Endothelial cell of umbilical vein (primary cell): ENCODE measurements at regions of chr3 and their contacts with region 1.

Region 1: DNA sequence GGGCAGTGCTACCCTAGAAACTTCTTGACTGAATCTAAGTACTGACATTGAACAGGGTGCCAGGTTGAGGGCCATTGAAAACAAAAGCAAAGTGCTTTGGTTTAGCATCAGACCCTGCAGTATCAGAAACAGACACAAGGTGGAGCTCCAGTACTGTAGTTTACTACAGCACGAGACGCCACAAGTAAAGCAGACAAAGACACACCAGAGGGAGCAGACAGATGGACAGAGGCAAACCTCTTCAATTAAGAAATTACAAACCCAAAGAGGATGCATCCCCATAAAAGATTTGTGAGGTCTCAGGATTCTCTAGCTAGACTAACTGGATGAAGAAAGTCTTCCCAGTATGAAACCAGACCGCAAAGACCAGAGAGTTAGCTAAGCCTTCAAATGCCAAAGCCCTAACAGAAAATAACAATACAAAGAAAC is 16.6 kb downstream of the TOP2B start:
- DNase-seq: peak; percentile 86
- H3K4me3 ChIP-seq: no peak overlapping the region
- H3K27ac ChIP-seq: no peak overlapping the region
- H3K4me1 ChIP-seq: no peaks in the 10 kb centered on the region
- H3K27me3 ChIP-seq: no peaks in the 10 kb centered on the region
- CTCF ChIP-seq: peak; percentile 83 to 89
- POLR2A ChIP-seq: no peak

Region 2: GRCh38 chr3:25633919-25634318 is 14.2 kb before region 1 on chr3:
- CTCF ChIA-PET with region 1: interaction called, 12 read pairs
- POLR2A ChIA-PET with region 1: no interaction called
- dilution Hi-C with region 1: no loop called
- intact Hi-C with region 1: no loop called
- DNase-seq: no peak
- H3K4me3 ChIP-seq: no peak overlapping the region
- H3K27ac ChIP-seq: no peak overlapping the region
- H3K4me1 ChIP-seq: no peaks in the 10 kb centered on the region
- H3K27me3 ChIP-seq: no peaks in the 10 kb centered on the region
- CTCF ChIP-seq: no peak
- POLR2A ChIP-seq: no peak

Region 3: DNA sequence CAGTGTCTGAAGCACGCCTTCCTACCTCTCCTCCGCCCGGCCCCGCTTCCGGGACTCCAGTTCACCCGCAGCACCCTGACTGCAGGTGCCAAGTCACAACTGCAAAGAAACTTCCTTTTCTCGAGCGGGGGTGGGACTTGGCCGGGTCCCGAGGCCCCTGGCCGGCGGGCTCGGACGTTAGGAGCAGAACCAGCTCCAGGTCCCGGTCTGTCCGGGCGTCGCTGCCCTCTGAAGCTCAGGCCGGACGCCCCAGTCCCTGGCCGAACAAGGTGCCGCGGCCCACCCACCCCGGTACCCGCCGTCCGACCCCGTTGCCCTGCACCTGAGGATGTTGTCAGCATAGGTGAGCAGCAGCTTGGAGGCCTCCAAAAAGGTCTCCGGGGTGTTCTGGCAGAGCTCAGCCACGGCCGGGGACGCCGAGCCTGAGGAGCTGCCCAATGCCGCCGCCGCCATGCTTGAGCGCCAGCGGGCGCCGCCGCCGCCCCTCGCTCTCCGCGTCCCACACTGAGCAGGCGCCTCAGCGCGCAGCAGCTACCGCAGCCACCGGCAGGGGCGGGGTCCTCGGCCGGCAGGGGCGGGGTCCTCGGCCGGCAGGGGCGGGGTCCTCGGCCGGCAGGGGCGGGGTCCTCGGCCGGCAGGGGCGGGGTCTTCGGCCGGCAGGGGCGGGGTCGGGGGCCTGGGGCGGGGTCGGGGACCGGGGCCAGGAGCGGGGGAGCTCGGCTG is 135.0 kb after region 1 on chr3 and contains the start of gene NGLY1:
- CTCF ChIA-PET with region 1: interaction called, 20 read pairs
- POLR2A ChIA-PET with region 1: no interaction called
- dilution Hi-C with region 1: no loop called
- intact Hi-C with region 1: loop called (anchors 1 kb)
- DNase-seq: peak; percentile 81
- H3K4me3 ChIP-seq: peak within 1 kb of the TSS; percentile 57 to 98 (median 81)
- H3K27ac ChIP-seq: peak within 1 kb of the TSS; percentile 47
- H3K4me1 ChIP-seq: peaks cover 13% of the 10 kb centered on the region
- H3K27me3 ChIP-seq: no peaks in the 10 kb centered on the region
- CTCF ChIP-seq: peak in 1 of 2 donors; percentile 5
- POLR2A ChIP-seq: peak; percentile 89
- total RNA-seq, gene NGLY1: 29.6 and 31.5 TPM in 2 replicates

Region 4: DNA sequence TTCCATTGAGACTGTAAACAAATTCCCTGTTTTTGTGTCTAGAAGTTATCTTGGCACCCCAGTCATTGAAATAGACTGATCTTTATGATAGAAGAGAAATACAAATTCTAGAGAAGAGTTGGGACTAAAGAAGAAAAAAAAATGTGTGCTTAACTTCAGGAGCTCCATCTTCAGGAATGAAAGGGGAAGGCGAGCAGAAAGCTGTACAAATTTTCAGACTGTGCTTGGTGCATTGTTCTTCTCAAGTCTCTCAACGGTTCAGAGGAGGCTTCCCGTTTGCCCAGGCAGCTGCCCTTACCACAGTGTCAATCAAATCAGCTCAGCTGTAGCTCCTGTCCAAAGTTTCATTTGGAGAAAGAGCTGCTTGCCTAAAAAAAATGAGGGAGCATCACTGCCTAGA is 183.5 kb after region 1 on chr3:
- CTCF ChIA-PET with region 1: interaction called, 50 read pairs
- POLR2A ChIA-PET with region 1: no interaction called
- dilution Hi-C with region 1: no loop called
- intact Hi-C with region 1: loop called (anchors 1 kb)
- DNase-seq: peak; percentile 34
- H3K4me3 ChIP-seq: no peak overlapping the region
- H3K27ac ChIP-seq: no peak overlapping the region
- H3K4me1 ChIP-seq: no peaks in the 10 kb centered on the region
- H3K27me3 ChIP-seq: peaks cover 0 to 5% of the 10 kb centered on the region in 2 experiments
- CTCF ChIP-seq: peak in 1 of 2 donors; percentile 28
- POLR2A ChIP-seq: no peak

Region 5: DNA sequence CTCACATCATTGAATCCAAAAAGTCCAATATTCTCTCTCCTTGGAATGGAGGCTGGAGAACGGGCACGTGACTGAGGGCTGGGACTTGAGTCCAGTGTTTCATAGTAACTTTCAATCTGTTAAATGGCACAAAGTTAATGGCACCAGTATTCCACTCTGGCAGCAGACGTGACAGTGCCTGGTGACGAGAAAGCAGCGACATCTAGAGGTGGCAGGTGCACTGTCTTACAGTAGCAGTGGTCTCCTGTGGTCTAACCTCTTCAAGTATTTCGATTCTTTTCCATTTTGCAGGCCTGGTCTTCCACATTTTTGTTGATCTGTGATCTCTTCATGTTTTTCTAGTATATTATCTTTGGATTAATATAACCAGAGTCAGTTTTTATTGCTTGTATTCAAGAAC is 248.9 kb after region 1 on chr3:
- CTCF ChIA-PET with region 1: interaction called, 3 read pairs
- POLR2A ChIA-PET with region 1: no interaction called
- dilution Hi-C with region 1: no loop called
- intact Hi-C with region 1: loop called (anchors 1 kb)
- DNase-seq: peak; percentile 3
- H3K4me3 ChIP-seq: no peak overlapping the region
- H3K27ac ChIP-seq: no peak overlapping the region
- H3K4me1 ChIP-seq: no peaks in the 10 kb centered on the region
- H3K27me3 ChIP-seq: no peaks in the 10 kb centered on the region
- CTCF ChIP-seq: peak; percentile 22 to 37
- POLR2A ChIP-seq: no peak